ENCODE measurements at regions of chr3 and their contacts with region 1.

Region 1: DNA sequence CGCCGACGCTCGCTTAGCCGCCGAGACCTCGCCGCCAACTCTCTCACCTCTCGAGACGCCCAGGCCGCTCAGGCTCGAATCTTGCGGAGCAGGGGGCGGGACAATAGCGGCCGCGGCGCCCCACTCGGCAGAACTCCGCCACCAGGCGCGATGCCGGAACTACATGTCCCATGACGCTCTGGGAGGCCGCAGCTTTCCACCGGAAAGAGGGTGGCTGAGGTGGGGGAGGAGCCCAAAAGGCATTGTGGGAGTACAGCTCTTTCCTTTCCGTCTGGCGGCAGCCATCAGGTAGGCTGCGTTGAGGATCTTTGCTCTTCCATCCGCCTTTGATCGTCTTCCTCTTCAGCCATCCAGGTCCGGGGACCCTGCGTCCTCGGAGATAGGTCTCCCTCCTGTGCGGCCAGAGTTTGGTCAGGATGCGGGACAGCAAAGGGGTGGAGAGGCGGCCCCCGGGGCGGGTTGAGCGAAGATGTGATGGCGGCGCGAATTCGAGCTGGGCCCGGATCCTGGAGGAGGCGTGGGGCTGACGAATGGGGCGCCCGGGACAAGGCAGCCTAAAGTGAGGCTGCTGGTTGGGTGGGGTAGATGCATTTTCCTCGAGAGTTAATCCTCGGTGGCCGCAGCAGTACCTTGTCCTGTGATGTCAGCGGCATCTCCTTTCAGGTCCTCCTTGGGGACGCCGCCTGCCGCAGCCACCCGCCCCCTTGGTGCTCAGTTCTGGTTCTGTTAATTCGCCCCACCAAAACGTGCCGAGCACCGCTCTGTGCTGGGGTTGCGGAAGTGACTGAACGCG is at the starts of genes NKIRAS1 and RPL15:
- DNase-seq: peak; percentile 94 to 99 (median 96)
- ATAC-seq: peak; percentile 92
- H3K4me3 ChIP-seq: peak within 1 kb of the TSS; percentile 94
- H3K4me3 Mint-ChIP-seq: peak within 1 kb of the TSS; percentile 99
- H3K27ac ChIP-seq: peak within 1 kb of the TSS; percentile 85 to 87
- H3K27ac Mint-ChIP-seq: peak within 1 kb of the TSS; percentile 98
- H3K4me1 ChIP-seq: peaks cover 29% of the 10 kb centered on the region
- H3K4me1 Mint-ChIP-seq: peaks cover 68% of the 10 kb centered on the region
- H3K27me3 ChIP-seq: no peaks in the 10 kb centered on the region
- H3K27me3 Mint-ChIP-seq: no peaks in the 10 kb centered on the region
- CTCF ChIP-seq: peak; percentile 60
- total RNA-seq, gene NKIRAS1: 3.2 to 3.8 TPM
- total RNA-seq, gene RPL15: 2,331 to 2,343 TPM

Region 2: GRCh38 chr3:23341147-23341838 is 575.8 kb before region 1 on chr3:
- CTCF ChIA-PET with region 1: no interaction called
- POLR2A ChIA-PET with region 1: no interaction called
- intact Hi-C with region 1: no loop called
- DNase-seq: no peak
- ATAC-seq: no peak
- H3K4me3 ChIP-seq: no peak overlapping the region
- H3K4me3 Mint-ChIP-seq: no peak overlapping the region
- H3K27ac ChIP-seq: no peak overlapping the region
- H3K27ac Mint-ChIP-seq: no peak overlapping the region
- H3K4me1 ChIP-seq: no peaks in the 10 kb centered on the region
- H3K4me1 Mint-ChIP-seq: peaks cover 8% of the 10 kb centered on the region
- H3K27me3 ChIP-seq: no peaks in the 10 kb centered on the region
- H3K27me3 Mint-ChIP-seq: no peaks in the 10 kb centered on the region
- CTCF ChIP-seq: no peak

Region 3: GRCh38 chr3:23805633-23806533 is 111.2 kb before region 1 on chr3 and contains the start of gene UBE2E1:
- CTCF ChIA-PET with region 1: no interaction called
- POLR2A ChIA-PET with region 1: interaction called, 63 read pairs
- intact Hi-C with region 1: loop called in 1 of 2 experiments (anchors 5 kb)
- DNase-seq: peak; percentile 62 to 93 (median 70)
- ATAC-seq: peak; percentile 85
- H3K4me3 ChIP-seq: peak within 1 kb of the TSS; percentile 66
- H3K4me3 Mint-ChIP-seq: peak within 1 kb of the TSS; percentile 99
- H3K27ac ChIP-seq: peak within 1 kb of the TSS in 1 of 2 donors; percentile 64
- H3K27ac Mint-ChIP-seq: peak within 1 kb of the TSS; percentile 91
- H3K4me1 ChIP-seq: peaks cover 32% of the 10 kb centered on the region
- H3K4me1 Mint-ChIP-seq: peaks cover 47% of the 10 kb centered on the region
- H3K27me3 ChIP-seq: no peaks in the 10 kb centered on the region
- H3K27me3 Mint-ChIP-seq: no peaks in the 10 kb centered on the region
- CTCF ChIP-seq: no peak
- total RNA-seq, gene UBE2E1: 49.8 to 52.2 TPM

Region 4: DNA sequence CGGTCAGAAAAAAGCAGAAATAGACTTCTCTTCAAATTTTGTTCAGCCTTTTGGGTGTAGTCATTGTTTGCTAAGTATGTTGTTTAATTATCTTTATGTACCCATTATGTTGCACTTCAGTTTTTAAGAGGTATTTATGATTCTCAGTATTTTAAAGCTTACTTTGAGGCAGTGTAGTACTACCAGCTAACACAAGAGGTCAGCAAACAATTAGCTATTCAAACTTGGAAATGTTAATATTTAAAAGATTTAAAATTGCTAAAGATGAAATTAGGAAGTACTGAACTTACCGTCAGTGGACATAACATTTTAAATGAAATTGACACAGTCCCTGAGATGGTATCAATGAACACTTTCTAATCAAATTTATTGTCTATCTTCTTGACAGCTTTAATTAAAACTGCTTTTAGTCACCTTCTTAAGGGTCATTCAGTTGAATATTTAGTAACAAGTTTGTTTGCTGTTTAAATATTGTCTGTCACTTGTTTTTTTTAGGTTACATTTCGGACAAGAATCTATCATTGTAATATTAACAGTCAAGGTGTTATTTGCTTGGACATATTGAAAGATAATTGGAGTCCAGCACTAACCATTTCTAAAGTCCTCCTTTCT is 28.4 kb before region 1 on chr3:
- CTCF ChIA-PET with region 1: interaction called, 3 read pairs
- POLR2A ChIA-PET with region 1: interaction called, 19 read pairs
- intact Hi-C with region 1: no loop called
- DNase-seq: peak in 4 of 14 experiments; percentile 21 to 68 (median 51)
- ATAC-seq: peak; percentile 51
- H3K4me3 ChIP-seq: no peak overlapping the region
- H3K4me3 Mint-ChIP-seq: no peak overlapping the region
- H3K27ac ChIP-seq: no peak overlapping the region
- H3K27ac Mint-ChIP-seq: peak overlapping the region; percentile 32
- H3K4me1 ChIP-seq: no peaks in the 10 kb centered on the region
- H3K4me1 Mint-ChIP-seq: no peaks in the 10 kb centered on the region
- H3K27me3 ChIP-seq: no peaks in the 10 kb centered on the region
- H3K27me3 Mint-ChIP-seq: no peaks in the 10 kb centered on the region
- CTCF ChIP-seq: peak; percentile 88

Region 5: GRCh38 chr3:23938688-23939087 is 21.6 kb after region 1 on chr3:
- CTCF ChIA-PET with region 1: no interaction called
- POLR2A ChIA-PET with region 1: interaction called, 63 read pairs
- intact Hi-C with region 1: loop called in 1 of 2 experiments (anchors 1 kb)
- DNase-seq: no peak
- ATAC-seq: no peak
- H3K4me3 ChIP-seq: no peak overlapping the region
- H3K4me3 Mint-ChIP-seq: no peak overlapping the region
- H3K27ac ChIP-seq: no peak overlapping the region
- H3K27ac Mint-ChIP-seq: no peak overlapping the region
- H3K4me1 ChIP-seq: no peaks in the 10 kb centered on the region
- H3K4me1 Mint-ChIP-seq: peaks cover 3% of the 10 kb centered on the region
- H3K27me3 ChIP-seq: no peaks in the 10 kb centered on the region
- H3K27me3 Mint-ChIP-seq: no peaks in the 10 kb centered on the region
- CTCF ChIP-seq: no peak

Region 6: DNA sequence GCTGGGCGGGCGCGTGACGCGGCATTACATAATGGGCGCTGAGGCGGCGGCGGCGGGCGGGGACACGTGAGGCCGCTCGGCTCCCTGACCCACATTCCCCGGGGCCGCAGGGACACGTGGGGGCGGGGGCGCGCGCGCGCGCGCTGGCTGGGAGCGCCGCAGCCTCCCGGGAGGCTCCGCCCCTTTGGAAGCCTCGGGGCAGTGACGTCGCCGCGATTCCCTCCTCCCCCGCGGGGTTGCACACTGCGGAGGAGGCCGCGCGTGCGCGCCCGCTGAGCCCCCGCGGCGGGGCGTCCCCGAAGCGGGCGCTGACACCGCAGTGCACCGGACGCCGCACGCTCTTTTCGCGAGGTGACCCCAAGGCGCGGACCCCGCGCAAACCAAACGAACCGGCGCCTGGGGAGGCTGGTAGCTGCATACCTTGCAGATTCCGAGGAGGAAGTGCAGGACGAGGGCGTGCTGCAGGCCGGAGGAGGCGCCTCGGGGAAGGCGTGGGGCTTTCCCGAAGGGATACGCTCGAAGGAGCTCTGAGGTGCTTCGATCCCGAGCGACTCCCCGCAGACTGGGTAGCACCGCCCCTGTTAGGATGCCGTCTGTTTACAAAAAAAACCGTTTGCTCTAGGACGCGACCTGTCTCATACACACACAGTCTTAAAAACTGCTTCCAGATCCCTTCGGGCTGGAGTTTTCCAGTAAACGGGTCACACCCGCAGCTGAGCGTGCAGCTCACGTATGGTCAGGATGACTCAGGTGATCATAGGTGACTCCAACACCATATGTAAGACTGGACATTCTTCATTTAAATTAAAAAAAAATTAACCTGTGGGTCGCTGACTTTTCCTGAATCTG is 29.0 kb after region 1 on chr3:
- CTCF ChIA-PET with region 1: interaction called, 7 read pairs
- POLR2A ChIA-PET with region 1: interaction called, 95 read pairs
- intact Hi-C with region 1: loop called (anchors 1 kb)
- DNase-seq: peak; percentile 94 to 99 (median 98)
- ATAC-seq: peak; percentile 74
- H3K4me3 ChIP-seq: peak overlapping the region; percentile 95
- H3K4me3 Mint-ChIP-seq: peak overlapping the region; percentile 89
- H3K27ac ChIP-seq: peak overlapping the region; percentile 78 to 92
- H3K27ac Mint-ChIP-seq: peak overlapping the region; percentile 92
- H3K4me1 ChIP-seq: peaks cover 36% of the 10 kb centered on the region
- H3K4me1 Mint-ChIP-seq: peaks cover 58% of the 10 kb centered on the region
- H3K27me3 ChIP-seq: no peaks in the 10 kb centered on the region
- H3K27me3 Mint-ChIP-seq: no peaks in the 10 kb centered on the region
- CTCF ChIP-seq: no peak

Region 7: GRCh38 chr3:23952646-23953045 is 35.6 kb after region 1 on chr3:
- CTCF ChIA-PET with region 1: interaction called, 7 read pairs
- POLR2A ChIA-PET with region 1: interaction called, 95 read pairs
- intact Hi-C with region 1: no loop called
- DNase-seq: no peak
- ATAC-seq: no peak
- H3K4me3 ChIP-seq: no peak overlapping the region
- H3K4me3 Mint-ChIP-seq: no peak overlapping the region
- H3K27ac ChIP-seq: no peak overlapping the region
- H3K27ac Mint-ChIP-seq: no peak overlapping the region
- H3K4me1 ChIP-seq: peaks cover 39% of the 10 kb centered on the region
- H3K4me1 Mint-ChIP-seq: peaks cover 89% of the 10 kb centered on the region
- H3K27me3 ChIP-seq: no peaks in the 10 kb centered on the region
- H3K27me3 Mint-ChIP-seq: no peaks in the 10 kb centered on the region
- CTCF ChIP-seq: no peak

Region 8: DNA sequence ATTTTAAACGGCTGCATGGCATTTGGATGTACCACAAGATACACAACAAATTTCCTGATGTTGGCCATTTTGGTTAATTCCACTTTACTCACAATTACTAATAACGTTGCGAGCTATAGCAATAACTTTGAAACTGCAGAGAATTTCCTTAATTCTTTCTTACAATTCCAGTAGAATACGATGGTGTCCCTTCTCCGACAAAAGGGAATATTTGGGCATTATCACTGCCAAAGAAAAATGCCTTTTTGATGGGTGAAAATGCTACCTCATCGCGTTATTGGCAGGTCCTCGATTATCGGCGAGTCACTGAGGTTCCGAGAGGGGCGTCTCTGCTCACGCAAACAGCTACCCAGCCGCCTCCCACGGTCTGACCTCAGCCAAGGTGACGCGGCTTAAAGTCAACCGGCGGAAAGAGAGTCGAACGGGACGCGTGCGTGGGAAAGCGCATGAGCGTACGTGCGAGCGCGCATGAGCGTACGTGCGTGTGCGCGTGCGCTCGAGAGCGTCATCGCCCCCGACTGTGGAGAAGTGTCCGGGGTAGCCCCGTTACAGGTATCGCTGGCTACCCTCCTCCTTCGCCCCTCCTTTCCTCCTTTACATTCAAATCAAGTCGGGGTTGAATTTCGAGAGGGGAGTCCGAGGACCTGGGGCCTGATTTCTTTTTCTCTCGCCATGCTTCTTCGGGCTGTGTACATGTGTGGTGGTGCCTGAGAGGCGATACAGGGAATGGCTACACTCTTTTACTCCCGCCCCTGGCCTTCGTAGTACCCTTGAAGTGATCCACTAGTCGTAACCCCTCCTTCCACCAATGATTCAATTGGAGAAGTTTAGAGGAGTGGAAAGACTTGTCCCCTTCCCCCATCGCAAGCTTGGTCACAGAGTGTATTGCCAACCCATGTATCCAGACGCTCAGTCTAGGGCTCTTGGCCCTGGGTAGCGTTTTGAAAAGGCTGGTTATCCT is 1872.8 kb after region 1 on chr3 and contains the start of gene OXSM:
- CTCF ChIA-PET with region 1: no interaction called
- POLR2A ChIA-PET with region 1: no interaction called
- intact Hi-C with region 1: loop called in 1 of 2 experiments (anchors 10 kb)
- DNase-seq: peak; percentile 78 to 98 (median 86)
- ATAC-seq: peak; percentile 92
- H3K4me3 ChIP-seq: peak within 1 kb of the TSS; percentile 75
- H3K4me3 Mint-ChIP-seq: peak within 1 kb of the TSS; percentile 98
- H3K27ac ChIP-seq: peak within 1 kb of the TSS; percentile 83 to 91
- H3K27ac Mint-ChIP-seq: peak within 1 kb of the TSS; percentile 94
- H3K4me1 ChIP-seq: peaks cover 15% of the 10 kb centered on the region
- H3K4me1 Mint-ChIP-seq: peaks cover 56% of the 10 kb centered on the region
- H3K27me3 ChIP-seq: no peaks in the 10 kb centered on the region
- H3K27me3 Mint-ChIP-seq: no peaks in the 10 kb centered on the region
- CTCF ChIP-seq: no peak
- total RNA-seq, gene OXSM: 6.2 to 7.9 TPM